ENCODE measurements at regions of chr5 and their contacts with region 1.

Region 1: DNA sequence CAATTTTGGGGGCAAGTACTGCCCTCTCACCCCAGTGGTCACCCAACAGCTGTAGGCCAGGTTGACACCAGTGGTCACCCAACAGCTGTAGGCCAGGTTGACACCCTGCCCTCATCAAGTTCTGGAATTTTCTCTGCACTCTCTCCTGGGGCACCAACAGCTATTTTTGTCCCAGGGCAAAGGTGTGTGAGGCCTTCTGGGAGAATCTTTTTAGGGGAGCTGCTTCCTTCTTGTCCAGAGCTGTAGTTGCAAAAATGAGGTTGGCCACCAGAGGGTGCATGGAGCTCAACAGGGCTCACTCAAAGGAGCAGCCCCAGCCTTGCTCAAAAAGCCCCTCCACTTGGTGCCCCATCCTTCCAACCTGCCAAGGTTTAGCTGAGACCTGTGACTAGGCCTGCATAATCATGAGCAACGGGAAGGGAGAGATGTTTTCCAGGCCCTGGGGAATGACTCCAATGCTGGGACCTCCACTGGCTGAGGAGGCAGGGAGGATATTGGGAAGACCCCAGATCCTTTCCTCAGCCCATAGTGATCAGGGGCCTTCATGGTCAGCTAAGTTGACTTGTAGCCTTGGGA is 10.6 kb upstream of the P4HA2 start:
- DNase-seq: peak; percentile 60 to 73 (median 68)
- ATAC-seq: peak; percentile 57 to 84 (median 76)
- H3K4me3 ChIP-seq: no peak overlapping the region
- H3K27ac ChIP-seq: no peak overlapping the region
- H3K4me1 ChIP-seq: no peaks in the 10 kb centered on the region
- H3K27me3 ChIP-seq: no peaks in the 10 kb centered on the region
- CTCF ChIP-seq: peak; percentile 73 to 90 (median 80)
- POLR2A ChIP-seq: no peak

Region 2: GRCh38 chr5:131796793-131797693 is 441.2 kb before region 1 on chr5 and contains the start of gene FNIP1:
- intact Hi-C with region 1: no loop called
- DNase-seq: peak; percentile 100
- ATAC-seq: peak; percentile 97 to 98 (median 98)
- H3K4me3 ChIP-seq: peak within 1 kb of the TSS; percentile 86 to 99 (median 97)
- H3K27ac ChIP-seq: peak within 1 kb of the TSS; percentile 97 to 100 (median 99)
- H3K4me1 ChIP-seq: peaks cover 0 to 46% (median 30%) of the 10 kb centered on the region in 12 donors
- H3K27me3 ChIP-seq: no peaks in the 10 kb centered on the region
- CTCF ChIP-seq: peak in 3 of 12 donors; percentile 14 to 26 (median 20)
- POLR2A ChIP-seq: peak; percentile 86 to 97
- total RNA-seq, gene FNIP1: 27.5 to 41.3 (median 35.1) TPM

Region 3: DNA sequence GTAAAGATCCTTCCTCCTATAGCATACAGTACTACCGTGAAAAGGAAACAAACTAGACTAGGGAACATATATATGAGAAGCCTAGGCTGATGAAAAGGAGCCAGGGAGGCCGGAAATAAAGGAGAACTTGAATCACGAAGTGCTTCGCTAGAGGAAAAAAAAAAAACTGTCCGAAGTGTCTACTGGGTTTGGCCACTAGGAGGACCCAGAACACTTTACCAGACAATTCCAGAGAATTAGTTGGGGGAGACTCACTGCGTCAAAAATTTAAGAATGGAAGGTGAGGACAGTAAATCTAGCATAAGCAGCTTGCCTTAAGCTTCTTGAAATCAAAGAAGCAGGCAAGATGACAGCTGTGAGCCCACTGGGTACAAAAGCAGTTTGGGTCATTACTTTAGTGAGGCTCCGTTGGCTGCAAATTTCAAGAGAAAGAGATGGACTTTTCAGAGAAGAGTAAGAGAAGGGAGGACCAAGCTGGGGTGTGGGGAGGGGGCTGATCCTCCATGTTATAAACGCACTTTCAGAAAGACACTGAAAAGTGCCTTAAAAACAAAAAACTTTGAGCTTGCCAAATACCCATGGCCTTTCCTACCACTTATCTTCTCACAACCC is 58.0 kb before region 1 on chr5:
- intact Hi-C with region 1: loop called in 2 of 10 experiments (anchors 5 to 10 kb)
- DNase-seq: no peak
- ATAC-seq: peak in 2 of 4 donors; percentile 58 to 64
- H3K4me3 ChIP-seq: no peak overlapping the region
- H3K27ac ChIP-seq: no peak overlapping the region
- H3K4me1 ChIP-seq: peaks cover 0 to 18% (median 3%) of the 10 kb centered on the region in 12 donors
- H3K27me3 ChIP-seq: no peaks in the 10 kb centered on the region
- CTCF ChIP-seq: peak; percentile 53 to 81 (median 71)
- POLR2A ChIP-seq: no peak

Measured in heart left ventricle (tissue), 16 donors.